ENCODE measurements at regions of chr11 and their contacts with region 1.

Region 1: DNA sequence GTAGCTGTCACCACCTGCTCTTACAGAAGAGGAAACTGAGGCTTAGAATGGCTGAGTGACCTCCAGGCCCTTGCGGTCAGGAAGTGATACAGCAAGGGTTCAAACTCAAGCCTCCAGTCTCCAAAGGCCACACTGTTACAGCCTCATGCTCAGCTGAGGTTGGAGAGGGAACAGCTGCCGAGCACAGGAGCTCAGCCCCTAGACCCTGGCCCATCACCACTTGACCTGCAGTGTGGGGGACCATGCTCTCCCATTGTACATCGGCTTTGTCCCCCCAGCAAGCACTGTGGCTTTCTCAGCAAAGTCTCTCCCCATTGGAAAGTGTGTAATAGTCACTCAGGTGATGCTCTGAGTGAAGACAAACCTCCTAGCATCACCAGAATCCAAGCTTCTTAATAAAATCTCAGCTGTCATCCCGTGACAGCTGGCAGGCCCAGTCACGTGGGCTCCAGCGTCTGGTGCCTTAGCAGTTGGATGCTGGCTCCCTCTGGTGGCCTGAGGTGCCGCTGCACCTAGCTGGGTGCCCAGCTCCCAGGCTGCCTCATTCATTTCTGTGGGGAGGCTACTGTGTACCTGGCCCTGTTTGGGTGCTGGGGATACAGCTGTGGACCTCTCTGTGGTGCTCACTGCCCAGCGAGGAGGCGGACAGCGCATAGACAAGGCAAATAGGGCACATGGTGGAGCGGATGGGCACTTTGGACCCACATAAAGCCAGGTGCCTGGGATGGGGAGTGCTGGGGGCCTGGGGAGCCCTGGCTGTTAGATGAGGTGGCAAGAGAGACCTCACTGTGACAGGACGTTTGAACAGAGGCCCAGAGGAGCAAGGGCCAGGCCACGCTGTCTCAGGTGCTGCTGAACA is 19.1 kb upstream of the MYRF start:
- DNase-seq: peak; percentile 87
- H3K4me3 Mint-ChIP-seq: no peak overlapping the region
- H3K27ac Mint-ChIP-seq: no peak overlapping the region
- H3K4me1 Mint-ChIP-seq: peaks cover 8% of the 10 kb centered on the region
- H3K27me3 Mint-ChIP-seq: no peaks in the 10 kb centered on the region

Region 2: DNA sequence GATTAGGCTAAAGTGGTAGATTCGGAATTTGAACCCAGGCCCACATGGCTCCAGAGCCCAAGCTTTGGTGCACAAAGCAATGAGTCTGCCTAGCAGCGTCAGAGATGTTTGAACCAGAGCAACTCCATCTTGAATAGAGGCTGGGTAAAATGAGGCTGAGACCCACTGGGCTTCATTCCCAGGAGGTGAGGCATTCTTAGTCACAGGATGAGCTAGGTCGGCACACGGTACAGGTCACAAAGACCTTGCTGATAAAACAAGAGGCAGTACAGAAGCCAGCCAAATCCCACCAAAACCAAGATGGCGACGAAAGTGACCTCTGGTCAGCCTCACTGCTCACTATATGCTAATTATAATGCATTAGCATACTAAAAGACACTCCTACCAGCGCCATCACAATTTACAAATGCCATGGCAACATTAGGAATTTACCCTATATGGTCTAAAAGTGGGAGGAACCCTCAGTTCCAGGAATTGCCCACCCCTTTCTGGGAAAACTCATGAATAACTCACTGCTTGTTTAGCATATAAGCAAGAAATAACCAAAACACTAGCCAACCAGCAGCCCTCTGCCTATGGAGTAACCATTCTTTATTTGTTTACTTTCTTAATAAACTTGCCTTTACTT is 93.4 kb before region 1 on chr11:
- CTCF ChIA-PET with region 1: interaction called, 20 read pairs
- POLR2A ChIA-PET with region 1: no interaction called
- DNase-seq: no peak
- H3K4me3 Mint-ChIP-seq: no peak overlapping the region
- H3K27ac Mint-ChIP-seq: no peak overlapping the region
- H3K4me1 Mint-ChIP-seq: no peaks in the 10 kb centered on the region
- H3K27me3 Mint-ChIP-seq: peaks cover 5% of the 10 kb centered on the region

Region 3: DNA sequence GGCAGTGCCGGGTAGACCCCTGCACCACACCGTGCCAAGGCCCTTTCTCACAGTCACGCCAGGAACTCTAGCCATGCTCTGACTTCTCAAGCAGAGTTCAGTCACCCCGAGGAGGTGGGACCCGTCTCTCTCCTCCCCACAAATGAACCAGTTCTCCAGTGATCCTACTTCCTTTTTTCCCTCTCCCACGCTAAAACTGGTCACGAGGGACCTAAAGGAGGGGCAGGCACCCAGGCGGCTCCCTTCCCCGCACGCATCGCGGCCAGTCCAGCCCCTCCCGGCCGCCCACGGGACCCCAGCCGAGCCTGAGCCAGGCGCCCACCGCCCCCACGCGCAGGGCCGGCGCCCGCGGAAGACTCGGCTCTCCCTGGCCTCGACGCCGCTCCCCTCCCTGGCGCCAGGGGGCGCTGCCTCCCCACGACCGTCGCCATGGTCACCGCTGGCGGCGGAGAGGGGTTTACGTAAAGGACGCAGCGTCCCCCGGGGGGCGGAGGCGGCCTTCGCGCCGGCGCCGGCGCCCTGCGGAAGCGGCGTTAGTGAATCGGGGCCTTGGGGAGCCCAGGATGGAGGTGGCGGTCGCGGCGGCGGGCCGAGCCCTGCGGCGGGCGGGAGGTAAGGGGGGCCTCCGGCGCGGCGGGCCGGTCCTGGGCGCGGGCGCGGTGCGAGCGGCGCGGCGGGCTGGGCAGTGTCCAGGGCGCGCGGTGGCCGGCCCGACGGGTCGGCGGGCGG is 53.3 kb before region 1 on chr11 and contains the start of gene DAGLA:
- CTCF ChIA-PET with region 1: interaction called, 36 read pairs
- POLR2A ChIA-PET with region 1: interaction called, 4 read pairs
- DNase-seq: peak; percentile 75
- H3K4me3 Mint-ChIP-seq: peak within 1 kb of the TSS; percentile 26
- H3K27ac Mint-ChIP-seq: no peak within 1 kb of the TSS
- H3K4me1 Mint-ChIP-seq: peaks cover 4% of the 10 kb centered on the region
- H3K27me3 Mint-ChIP-seq: peaks cover 28% of the 10 kb centered on the region
- total RNA-seq, gene DAGLA: 0.10 to 0.13 TPM

Region 4: GRCh38 chr11:61694730-61695706 is 38.3 kb before region 1 on chr11:
- CTCF ChIA-PET with region 1: interaction called, 16 read pairs
- POLR2A ChIA-PET with region 1: interaction called, 4 read pairs
- DNase-seq: no peak
- H3K4me3 Mint-ChIP-seq: no peak overlapping the region
- H3K27ac Mint-ChIP-seq: no peak overlapping the region
- H3K4me1 Mint-ChIP-seq: peaks cover 29% of the 10 kb centered on the region
- H3K27me3 Mint-ChIP-seq: peaks cover 2% of the 10 kb centered on the region

Region 5: GRCh38 chr11:61701242-61701886 is 32.0 kb before region 1 on chr11:
- CTCF ChIA-PET with region 1: interaction called, 16 read pairs
- POLR2A ChIA-PET with region 1: interaction called, 4 read pairs
- DNase-seq: no peak
- H3K4me3 Mint-ChIP-seq: no peak overlapping the region
- H3K27ac Mint-ChIP-seq: no peak overlapping the region
- H3K4me1 Mint-ChIP-seq: peaks cover 36% of the 10 kb centered on the region
- H3K27me3 Mint-ChIP-seq: peaks cover 3% of the 10 kb centered on the region

Region 6: GRCh38 chr11:61711498-61711897 is 21.9 kb before region 1 on chr11:
- CTCF ChIA-PET with region 1: interaction called, 15 read pairs
- POLR2A ChIA-PET with region 1: no interaction called
- DNase-seq: no peak
- H3K4me3 Mint-ChIP-seq: no peak overlapping the region
- H3K27ac Mint-ChIP-seq: no peak overlapping the region
- H3K4me1 Mint-ChIP-seq: no peaks in the 10 kb centered on the region
- H3K27me3 Mint-ChIP-seq: peaks cover 4% of the 10 kb centered on the region

Region 7: DNA sequence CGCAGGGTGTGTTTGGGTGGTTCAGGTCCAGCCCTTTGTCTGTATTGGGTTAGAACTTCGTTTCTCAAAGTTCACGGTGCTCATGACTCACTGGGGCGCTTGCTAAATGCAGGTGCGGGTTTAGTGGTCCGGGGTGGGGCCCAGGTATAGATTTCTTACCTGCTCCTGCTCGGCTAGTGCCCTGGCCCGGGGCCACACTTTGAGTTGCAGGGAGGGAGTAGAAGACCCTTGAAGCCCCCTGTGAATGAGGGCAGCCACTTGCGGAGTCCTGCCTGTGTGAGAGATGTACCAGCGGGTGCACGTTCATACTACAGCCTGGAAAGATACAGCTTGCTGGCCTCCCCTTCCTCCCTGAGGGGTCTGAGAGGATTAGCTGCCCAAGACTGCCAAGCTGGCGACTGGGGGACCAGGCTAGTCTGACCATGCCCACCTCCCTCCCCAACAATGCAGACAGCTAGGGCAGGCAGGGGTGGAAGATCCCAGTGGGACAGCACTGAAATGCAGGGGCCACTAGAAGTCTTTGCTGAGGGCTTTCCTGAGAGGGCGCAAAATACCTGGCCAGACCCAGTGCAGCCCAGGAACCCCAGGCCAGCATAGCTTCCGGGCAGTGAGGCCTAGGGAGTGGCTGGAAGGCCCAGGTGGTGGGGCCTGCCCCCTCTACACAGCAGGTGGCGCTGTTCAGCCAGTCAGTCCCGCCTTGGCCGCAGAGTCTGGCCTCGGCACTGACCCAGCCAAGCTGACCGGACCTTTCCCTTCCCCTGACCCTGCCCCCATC is 14.0 kb after region 1 on chr11:
- CTCF ChIA-PET with region 1: interaction called, 10 read pairs
- POLR2A ChIA-PET with region 1: no interaction called
- DNase-seq: peak; percentile 63
- H3K4me3 Mint-ChIP-seq: no peak overlapping the region
- H3K27ac Mint-ChIP-seq: no peak overlapping the region
- H3K4me1 Mint-ChIP-seq: peaks cover 2% of the 10 kb centered on the region
- H3K27me3 Mint-ChIP-seq: peaks cover 19% of the 10 kb centered on the region